ENCODE measurements at regions of chr6 and their contacts with region 1.

Region 1: GRCh38 chr6:142195862-142196541 is 48.9 kb downstream of the VTA1 start:
- DNase-seq: no peak
- H3K4me3 Mint-ChIP-seq: no peak overlapping the region
- H3K27ac Mint-ChIP-seq: no peak overlapping the region
- H3K4me1 Mint-ChIP-seq: peaks cover 11% of the 10 kb centered on the region
- H3K27me3 Mint-ChIP-seq: no peaks in the 10 kb centered on the region
- CTCF ChIP-seq: no peak

Region 2: DNA sequence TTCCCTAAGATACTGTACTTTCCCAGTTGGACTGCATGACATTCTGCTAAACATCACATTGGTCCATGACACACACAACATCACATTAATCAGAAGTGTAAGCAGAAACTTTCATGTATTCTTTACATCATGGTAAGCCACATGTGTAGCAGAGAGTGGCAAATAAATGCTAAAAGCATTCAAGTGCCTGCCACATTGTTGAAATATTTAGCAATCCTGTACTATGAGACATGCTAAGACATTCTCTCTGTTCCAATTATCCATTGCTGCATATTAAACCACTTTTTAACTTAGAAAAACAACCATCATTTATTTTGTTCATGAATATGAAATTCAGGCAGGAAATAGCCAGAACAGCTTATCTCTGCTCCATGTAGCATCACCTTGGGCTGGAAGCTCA is 271.0 kb before region 1 on chr6:
- CTCF ChIA-PET with region 1: no interaction called
- intact Hi-C with region 1: no loop called
- DNase-seq: no peak
- H3K4me3 Mint-ChIP-seq: no peak overlapping the region
- H3K27ac Mint-ChIP-seq: no peak overlapping the region
- H3K4me1 Mint-ChIP-seq: no peaks in the 10 kb centered on the region
- H3K27me3 Mint-ChIP-seq: no peaks in the 10 kb centered on the region
- CTCF ChIP-seq: no peak

Region 3: GRCh38 chr6:142155895-142156757 is 39.9 kb before region 1 on chr6:
- CTCF ChIA-PET with region 1: no interaction called
- intact Hi-C with region 1: loop called (anchors 5 kb)
- DNase-seq: no peak
- H3K4me3 Mint-ChIP-seq: peak overlapping the region; percentile 24
- H3K27ac Mint-ChIP-seq: no peak overlapping the region
- H3K4me1 Mint-ChIP-seq: peaks cover 9% of the 10 kb centered on the region
- H3K27me3 Mint-ChIP-seq: no peaks in the 10 kb centered on the region
- CTCF ChIP-seq: no peak

Region 4: DNA sequence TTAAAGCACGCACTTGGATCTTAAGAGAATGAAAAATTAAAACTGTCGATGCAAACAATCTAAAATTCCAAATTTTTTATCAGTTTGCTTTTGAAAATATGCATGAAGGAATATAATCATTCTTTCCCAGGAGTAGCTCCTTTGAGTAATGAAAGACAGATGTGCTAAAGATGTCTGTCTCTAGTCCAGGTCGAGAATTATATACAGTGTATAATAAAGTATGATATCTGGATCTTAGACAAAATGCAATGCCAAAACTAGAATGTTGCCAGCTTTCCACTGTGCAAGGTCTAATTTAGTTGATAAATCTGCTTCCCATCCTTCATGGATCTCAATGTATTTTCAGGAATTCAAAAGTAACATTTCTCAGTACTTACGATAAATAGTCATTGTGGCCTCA is 40.7 kb after region 1 on chr6:
- CTCF ChIA-PET with region 1: no interaction called
- intact Hi-C with region 1: no loop called
- DNase-seq: no peak
- H3K4me3 Mint-ChIP-seq: no peak overlapping the region
- H3K27ac Mint-ChIP-seq: no peak overlapping the region
- H3K4me1 Mint-ChIP-seq: no peaks in the 10 kb centered on the region
- H3K27me3 Mint-ChIP-seq: no peaks in the 10 kb centered on the region
- CTCF ChIP-seq: no peak

Region 5: GRCh38 chr6:142323377-142324040 is 127.5 kb after region 1 on chr6:
- CTCF ChIA-PET with region 1: no interaction called
- intact Hi-C with region 1: no loop called
- DNase-seq: no peak
- H3K4me3 Mint-ChIP-seq: no peak overlapping the region
- H3K27ac Mint-ChIP-seq: peak overlapping the region; percentile 56
- H3K4me1 Mint-ChIP-seq: peaks cover 39% of the 10 kb centered on the region
- H3K27me3 Mint-ChIP-seq: no peaks in the 10 kb centered on the region
- CTCF ChIP-seq: no peak